Activated T-helper 2 cell treated with anti-CD3 and anti-CD28 coated beads, Interferon-gamma antibody, Interleukin-2, Interleukin-4, amounts not matched to agents 10 μg/mL and 5 μg/mL and 100 μg/mL, durations not matched to agents 14 hours and 24 hours and 36 hours (primary cell): ENCODE measurements at regions of chr3 and their contacts with region 1.

Region 1: GRCh38 chr3:88058591-88059368 is at the starts of genes CGGBP1 and ZNF654:
- DNase-seq: peak; percentile 99
- H3K4me3 Mint-ChIP-seq: peak within 1 kb of the TSS; percentile 100
- H3K27ac Mint-ChIP-seq: peak within 1 kb of the TSS; percentile 98
- H3K4me1 Mint-ChIP-seq: peaks cover 50% of the 10 kb centered on the region
- H3K27me3 Mint-ChIP-seq: no peaks in the 10 kb centered on the region
- total RNA-seq, gene CGGBP1: 94.7 and 95.1 TPM in 2 replicates
- total RNA-seq, gene ZNF654: 16.7 and 20.7 TPM in 2 replicates

Region 2: DNA sequence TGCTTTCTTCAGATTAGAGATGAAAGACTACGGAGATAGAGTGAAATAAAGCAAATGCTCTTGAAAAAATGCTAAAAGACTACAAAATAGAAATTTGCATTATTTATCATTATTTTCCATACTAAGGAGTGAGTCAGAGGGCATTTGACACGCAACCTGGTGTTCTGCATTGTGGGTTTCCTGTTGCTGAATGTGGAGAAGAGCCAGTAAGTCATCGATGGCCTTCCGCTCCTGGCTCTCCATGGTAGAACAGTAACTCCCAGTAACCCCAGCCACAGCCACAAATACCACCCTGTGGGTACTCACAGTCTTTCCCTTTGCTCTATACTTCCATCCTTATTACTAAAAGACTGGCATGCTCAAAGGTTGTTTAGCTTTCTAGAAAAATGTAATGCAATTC is 61.5 kb before region 1 on chr3:
- intact Hi-C with region 1: loop called (anchors 1 kb)
- DNase-seq: peak; percentile 48
- H3K4me3 Mint-ChIP-seq: no peak overlapping the region
- H3K27ac Mint-ChIP-seq: peak overlapping the region; percentile 70
- H3K4me1 Mint-ChIP-seq: peaks cover 31% of the 10 kb centered on the region
- H3K27me3 Mint-ChIP-seq: peaks cover 13% of the 10 kb centered on the region

Region 3: DNA sequence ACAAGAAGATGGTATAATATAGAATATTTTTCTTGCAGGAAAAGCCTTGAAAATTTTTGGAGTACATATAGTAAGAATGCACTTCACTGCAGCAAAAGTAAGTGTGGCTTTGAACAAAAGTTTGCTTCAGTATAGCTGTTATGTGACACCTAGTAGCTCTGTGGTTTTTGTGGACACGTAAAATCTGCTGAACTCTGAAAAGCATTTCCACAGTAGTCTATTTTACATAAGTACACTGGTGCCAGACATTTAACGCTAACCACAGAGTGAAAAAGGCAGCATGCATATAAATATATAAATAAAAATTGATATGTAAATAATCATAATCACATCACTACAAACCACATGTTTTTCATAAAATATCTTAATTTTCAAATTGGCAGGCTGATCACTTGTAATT is 39.8 kb before region 1 on chr3:
- intact Hi-C with region 1: loop called (anchors 5 kb)
- DNase-seq: no peak
- H3K4me3 Mint-ChIP-seq: no peak overlapping the region
- H3K27ac Mint-ChIP-seq: no peak overlapping the region
- H3K4me1 Mint-ChIP-seq: peaks cover 31% of the 10 kb centered on the region
- H3K27me3 Mint-ChIP-seq: peaks cover 5% of the 10 kb centered on the region

Region 4: DNA sequence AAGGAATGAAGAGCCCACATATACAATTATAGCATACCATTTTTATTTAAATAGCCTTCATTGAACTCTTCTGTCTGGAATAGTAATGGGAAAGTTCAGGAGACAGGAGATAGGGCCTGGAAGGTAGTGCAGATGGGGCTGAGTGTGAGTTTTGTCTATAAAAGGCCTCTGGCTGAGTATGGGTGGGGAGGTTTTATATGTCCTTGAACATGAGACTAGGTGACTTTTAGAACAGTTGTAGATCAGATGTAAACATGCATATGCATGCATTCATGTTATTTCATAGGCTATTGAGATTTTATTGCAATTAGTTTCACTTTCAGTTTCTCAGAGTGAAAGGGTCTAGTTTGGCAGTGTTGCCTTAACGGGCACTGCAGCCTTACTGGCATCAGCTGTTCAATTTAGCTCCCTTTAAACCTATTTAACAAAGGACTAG is 27.1 kb before region 1 on chr3:
- intact Hi-C with region 1: loop called (anchors 2 kb)
- DNase-seq: no peak
- H3K4me3 Mint-ChIP-seq: peak overlapping the region; percentile 82
- H3K27ac Mint-ChIP-seq: peak overlapping the region; percentile 74
- H3K4me1 Mint-ChIP-seq: peaks cover 42% of the 10 kb centered on the region
- H3K27me3 Mint-ChIP-seq: peaks cover under 1% of the 10 kb centered on the region

Region 5: GRCh38 chr3:88075072-88075471 is 16.3 kb after region 1 on chr3:
- intact Hi-C with region 1: no loop called
- DNase-seq: no peak
- H3K4me3 Mint-ChIP-seq: no peak overlapping the region
- H3K27ac Mint-ChIP-seq: no peak overlapping the region
- H3K4me1 Mint-ChIP-seq: peaks cover 25% of the 10 kb centered on the region
- H3K27me3 Mint-ChIP-seq: no peaks in the 10 kb centered on the region

Region 6: GRCh38 chr3:88113311-88114162 is 54.8 kb after region 1 on chr3:
- intact Hi-C with region 1: loop called (anchors 1 kb)
- DNase-seq: peak; percentile 27
- H3K4me3 Mint-ChIP-seq: no peak overlapping the region
- H3K27ac Mint-ChIP-seq: no peak overlapping the region
- H3K4me1 Mint-ChIP-seq: peaks cover 23% of the 10 kb centered on the region
- H3K27me3 Mint-ChIP-seq: no peaks in the 10 kb centered on the region

Region 7: DNA sequence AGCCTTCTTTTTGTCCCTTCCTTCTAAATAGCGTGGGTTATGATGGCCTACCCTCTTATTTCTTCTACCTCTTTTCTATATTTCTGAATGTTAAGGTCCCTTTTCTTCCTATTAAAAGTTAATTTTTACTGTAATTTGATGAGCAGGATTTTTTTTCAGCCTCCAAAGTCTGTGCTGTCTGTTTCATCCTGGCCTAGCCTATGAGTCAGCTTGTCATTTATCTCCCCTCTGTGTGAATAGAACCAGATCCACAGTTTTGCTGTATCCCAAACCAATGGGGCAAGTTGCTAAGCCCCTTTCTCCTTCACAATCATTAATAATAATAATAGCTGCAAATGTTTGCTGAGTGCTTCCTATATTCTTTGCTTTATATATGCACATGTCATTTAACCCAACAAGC is 72.9 kb after region 1 on chr3:
- intact Hi-C with region 1: loop called (anchors 5 kb)
- DNase-seq: no peak
- H3K4me3 Mint-ChIP-seq: no peak overlapping the region
- H3K27ac Mint-ChIP-seq: no peak overlapping the region
- H3K4me1 Mint-ChIP-seq: peaks cover 6% of the 10 kb centered on the region
- H3K27me3 Mint-ChIP-seq: no peaks in the 10 kb centered on the region

Region 8: GRCh38 chr3:88149509-88150362 is 91.0 kb after region 1 on chr3 and contains the start of gene C3orf38:
- intact Hi-C with region 1: loop called (anchors 1 kb)
- DNase-seq: peak; percentile 80
- H3K4me3 Mint-ChIP-seq: peak within 1 kb of the TSS; percentile 96
- H3K27ac Mint-ChIP-seq: peak within 1 kb of the TSS; percentile 99
- H3K4me1 Mint-ChIP-seq: peaks cover 27% of the 10 kb centered on the region
- H3K27me3 Mint-ChIP-seq: no peaks in the 10 kb centered on the region
- total RNA-seq, gene C3orf38: 23.1 and 25.4 TPM in 2 replicates